ENCODE measurements at regions of chr1 and their contacts with region 1.

Region 1: DNA sequence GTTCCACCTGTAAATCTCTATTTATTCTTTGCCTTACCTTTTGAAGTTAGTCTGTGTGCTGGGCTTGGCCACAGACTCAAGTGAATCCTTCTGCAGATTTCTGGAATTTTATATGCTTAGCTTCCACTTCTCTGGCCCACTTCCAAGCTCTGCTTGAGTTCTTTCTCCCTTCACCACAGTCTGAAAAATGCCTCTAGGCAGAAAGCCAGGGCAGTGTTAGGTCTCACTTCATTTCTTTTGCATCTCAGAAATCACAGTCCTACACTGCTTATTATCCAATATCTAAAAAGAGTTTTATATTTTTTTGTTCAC is 48.9 kb downstream of the INKA2 start:
- DNase-seq: no peak
- H3K4me3 ChIP-seq: no peak overlapping the region
- H3K4me3 Mint-ChIP-seq: peak overlapping the region in 1 of 7 donors; percentile 1
- H3K27ac ChIP-seq: no peak overlapping the region
- H3K27ac Mint-ChIP-seq: peak overlapping the region; percentile 13 to 78 (median 64)
- H3K4me1 ChIP-seq: peaks cover 8% of the 10 kb centered on the region
- H3K4me1 Mint-ChIP-seq: peaks cover 63 to 90% (median 82%) of the 10 kb centered on the region in 3 donors
- H3K27me3 ChIP-seq: no peaks in the 10 kb centered on the region
- H3K27me3 Mint-ChIP-seq: no peaks in the 10 kb centered on the region

Region 2: DNA sequence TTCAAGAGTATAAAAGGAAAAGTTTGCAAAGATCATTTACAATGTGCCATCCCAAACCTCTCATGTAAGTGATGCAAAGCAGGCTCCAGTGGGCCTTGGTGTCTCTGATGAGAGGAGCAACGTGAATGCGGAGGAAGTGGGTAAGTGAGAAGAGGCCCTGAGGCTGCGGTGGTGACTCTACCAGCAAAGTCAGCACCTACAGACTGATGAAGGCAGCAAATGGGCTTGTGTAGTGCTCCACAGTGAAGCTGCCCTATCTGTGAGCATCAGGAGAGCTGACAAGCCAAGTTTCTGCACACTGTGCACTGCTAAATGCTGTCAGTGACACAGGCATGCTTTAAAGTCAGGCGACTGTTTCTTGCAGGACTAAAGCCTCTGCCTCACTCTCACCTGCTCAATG is 86.3 kb before region 1 on chr1:
- CTCF ChIA-PET with region 1: no interaction called
- POLR2A ChIA-PET with region 1: no interaction called
- DNase-seq: peak; percentile 54 to 88 (median 79)
- H3K4me3 ChIP-seq: no peak overlapping the region
- H3K4me3 Mint-ChIP-seq: peak overlapping the region in 6 of 7 donors; percentile 66 to 82 (median 70)
- H3K27ac ChIP-seq: no peak overlapping the region
- H3K27ac Mint-ChIP-seq: peak overlapping the region; percentile 85 to 97 (median 92)
- H3K4me1 ChIP-seq: peaks cover 73% of the 10 kb centered on the region
- H3K4me1 Mint-ChIP-seq: peaks cover 72 to 79% (median 77%) of the 10 kb centered on the region in 3 donors
- H3K27me3 ChIP-seq: no peaks in the 10 kb centered on the region
- H3K27me3 Mint-ChIP-seq: no peaks in the 10 kb centered on the region

Region 3: GRCh38 chr1:111664652-111665051 is 25.6 kb before region 1 on chr1:
- CTCF ChIA-PET with region 1: no interaction called
- POLR2A ChIA-PET with region 1: interaction called, 10 read pairs
- DNase-seq: no peak
- H3K4me3 ChIP-seq: no peak overlapping the region
- H3K4me3 Mint-ChIP-seq: peak overlapping the region in 6 of 7 donors; percentile 2 to 66 (median 30)
- H3K27ac ChIP-seq: no peak overlapping the region
- H3K27ac Mint-ChIP-seq: peak overlapping the region in 7 of 8 donors; percentile 2 to 77 (median 70)
- H3K4me1 ChIP-seq: peaks cover 58% of the 10 kb centered on the region
- H3K4me1 Mint-ChIP-seq: peaks cover 53 to 72% (median 70%) of the 10 kb centered on the region in 3 donors
- H3K27me3 ChIP-seq: no peaks in the 10 kb centered on the region
- H3K27me3 Mint-ChIP-seq: no peaks in the 10 kb centered on the region